CD8-positive, alpha-beta memory T cell (primary cell): ENCODE measurements at regions of chr10 and their contacts with region 1.

Region 1: GRCh38 chr10:35126530-35127296 is at the start of gene CREM:
- DNase-seq: peak; percentile 98 to 100 (median 99)
- H3K4me3 ChIP-seq: peak within 1 kb of the TSS; percentile 77
- H3K4me3 Mint-ChIP-seq: peak within 1 kb of the TSS; percentile 85 to 98 (median 91)
- H3K27ac ChIP-seq: peak within 1 kb of the TSS; percentile 100
- H3K27ac Mint-ChIP-seq: peak within 1 kb of the TSS; percentile 88 to 100 (median 99)
- H3K4me1 ChIP-seq: peaks cover 38% of the 10 kb centered on the region
- H3K4me1 Mint-ChIP-seq: peaks cover 33 to 52% (median 41%) of the 10 kb centered on the region in 3 donors
- H3K27me3 ChIP-seq: no peaks in the 10 kb centered on the region
- H3K27me3 Mint-ChIP-seq: peaks cover 0 to 10% of the 10 kb centered on the region in 2 donors
- total RNA-seq, gene CREM: 132 to 134 TPM

Region 2: DNA sequence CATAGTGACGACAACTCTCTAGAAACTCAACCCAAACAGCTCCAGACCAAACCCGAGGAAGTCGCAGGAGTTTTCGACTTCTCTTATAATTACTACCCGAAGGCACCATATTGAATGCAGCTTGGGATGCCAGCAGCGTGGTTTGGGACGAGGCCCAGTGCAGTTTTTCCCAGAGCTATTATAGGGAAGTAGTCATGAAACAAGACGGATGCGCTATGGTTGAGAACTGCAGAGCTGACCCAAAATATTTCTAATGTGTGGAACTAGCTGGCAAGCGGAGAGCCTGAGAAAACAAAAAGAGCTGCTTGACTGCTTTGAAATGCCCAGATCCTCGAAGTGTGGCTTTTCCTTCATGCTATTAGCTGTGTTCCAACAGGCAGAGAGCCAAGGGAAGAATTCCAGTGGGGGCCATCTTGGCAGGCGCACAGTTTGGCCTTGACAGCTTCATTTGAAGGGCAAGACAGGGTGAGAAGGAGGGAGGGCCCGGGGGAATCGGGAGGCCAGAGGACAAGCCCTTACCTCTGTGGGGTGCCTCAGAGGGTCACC is 159.3 kb before region 1 on chr10:
- CTCF ChIA-PET with region 1: no interaction called
- POLR2A ChIA-PET with region 1: no interaction called
- DNase-seq: no peak
- H3K4me3 ChIP-seq: no peak overlapping the region
- H3K4me3 Mint-ChIP-seq: no peak overlapping the region
- H3K27ac ChIP-seq: no peak overlapping the region
- H3K27ac Mint-ChIP-seq: no peak overlapping the region
- H3K4me1 ChIP-seq: no peaks in the 10 kb centered on the region
- H3K4me1 Mint-ChIP-seq: no peaks in the 10 kb centered on the region
- H3K27me3 ChIP-seq: no peaks in the 10 kb centered on the region
- H3K27me3 Mint-ChIP-seq: peaks cover 0 to 4% of the 10 kb centered on the region in 2 donors

Region 3: DNA sequence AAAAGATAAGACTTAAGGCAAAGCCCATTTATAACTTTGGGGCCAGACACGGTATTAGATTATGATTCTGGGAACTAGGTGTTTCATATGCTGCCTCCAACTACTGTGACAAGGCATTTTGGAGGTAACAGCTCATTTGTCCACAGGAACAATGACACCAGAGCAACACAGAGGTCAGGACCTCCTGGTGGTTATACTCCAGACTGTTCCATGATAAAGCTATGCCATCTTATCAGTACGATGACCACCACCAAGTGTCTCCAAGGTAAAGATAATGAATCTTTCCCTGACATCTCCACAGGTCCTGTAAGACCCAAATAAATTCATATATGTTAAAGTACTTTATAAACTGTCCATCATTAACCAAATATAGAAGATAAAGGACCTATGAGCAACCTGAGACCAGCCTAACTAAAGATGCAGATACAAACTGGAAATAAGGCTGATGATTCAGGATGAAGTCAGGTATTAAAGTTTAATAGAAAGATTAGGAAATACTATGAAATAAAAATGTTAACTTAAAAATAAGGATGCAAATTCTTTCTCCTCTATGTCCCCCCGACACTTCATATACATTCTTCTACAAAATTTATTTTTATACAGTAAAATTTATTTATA is 62.8 kb before region 1 on chr10:
- CTCF ChIA-PET with region 1: no interaction called
- POLR2A ChIA-PET with region 1: no interaction called
- DNase-seq: no peak
- H3K4me3 ChIP-seq: no peak overlapping the region
- H3K4me3 Mint-ChIP-seq: no peak overlapping the region
- H3K27ac ChIP-seq: no peak overlapping the region
- H3K27ac Mint-ChIP-seq: no peak overlapping the region
- H3K4me1 ChIP-seq: no peaks in the 10 kb centered on the region
- H3K4me1 Mint-ChIP-seq: peaks cover 2 to 24% (median 12%) of the 10 kb centered on the region in 3 donors
- H3K27me3 ChIP-seq: no peaks in the 10 kb centered on the region
- H3K27me3 Mint-ChIP-seq: no peaks in the 10 kb centered on the region

Region 4: GRCh38 chr10:35090162-35090954 is 36.4 kb before region 1 on chr10 and contains the start of gene CUL2:
- CTCF ChIA-PET with region 1: interaction called, 14 read pairs
- POLR2A ChIA-PET with region 1: interaction called, 23 read pairs
- DNase-seq: peak; percentile 86 to 95 (median 93)
- H3K4me3 ChIP-seq: peak within 1 kb of the TSS; percentile 75
- H3K4me3 Mint-ChIP-seq: peak within 1 kb of the TSS; percentile 92 to 100 (median 95)
- H3K27ac ChIP-seq: peak within 1 kb of the TSS; percentile 95
- H3K27ac Mint-ChIP-seq: peak within 1 kb of the TSS; percentile 93 to 100 (median 98)
- H3K4me1 ChIP-seq: peaks cover 36% of the 10 kb centered on the region
- H3K4me1 Mint-ChIP-seq: peaks cover 49 to 56% (median 53%) of the 10 kb centered on the region in 3 donors
- H3K27me3 ChIP-seq: no peaks in the 10 kb centered on the region
- H3K27me3 Mint-ChIP-seq: peaks cover 5 to 10% of the 10 kb centered on the region in 2 donors
- total RNA-seq, gene CUL2: 56.8 to 59.4 TPM

Region 5: DNA sequence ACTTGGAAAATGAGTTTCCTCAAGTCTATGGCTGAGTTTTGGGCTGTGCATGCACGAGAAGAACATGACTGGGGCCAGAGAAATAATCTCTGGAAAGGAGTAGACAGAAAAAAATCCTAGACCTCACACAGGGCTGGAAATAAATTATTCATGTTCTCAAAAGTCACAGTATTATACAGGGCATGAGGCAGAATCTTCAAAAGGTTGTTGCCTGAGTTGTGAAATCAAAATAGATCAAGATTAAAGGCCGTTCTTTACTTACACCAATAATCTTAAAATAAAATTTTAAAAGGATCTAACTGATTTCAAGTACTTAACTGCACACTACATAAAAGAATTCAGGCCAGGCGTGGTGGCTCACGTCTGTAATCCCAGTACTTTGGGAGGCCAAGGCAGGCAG is 14.1 kb before region 1 on chr10:
- CTCF ChIA-PET with region 1: no interaction called
- POLR2A ChIA-PET with region 1: no interaction called
- DNase-seq: no peak
- H3K4me3 ChIP-seq: no peak overlapping the region
- H3K4me3 Mint-ChIP-seq: no peak overlapping the region
- H3K27ac ChIP-seq: no peak overlapping the region
- H3K27ac Mint-ChIP-seq: no peak overlapping the region
- H3K4me1 ChIP-seq: no peaks in the 10 kb centered on the region
- H3K4me1 Mint-ChIP-seq: no peaks in the 10 kb centered on the region
- H3K27me3 ChIP-seq: no peaks in the 10 kb centered on the region
- H3K27me3 Mint-ChIP-seq: peaks cover 2 to 3% of the 10 kb centered on the region in 2 donors

Region 6: GRCh38 chr10:35150308-35150707 is 23.6 kb after region 1 on chr10:
- CTCF ChIA-PET with region 1: interaction called, 3 read pairs
- POLR2A ChIA-PET with region 1: interaction called, 14 read pairs
- DNase-seq: no peak
- H3K4me3 ChIP-seq: no peak overlapping the region
- H3K4me3 Mint-ChIP-seq: peak overlapping the region in 4 of 7 donors; percentile 16 to 64 (median 56)
- H3K27ac ChIP-seq: no peak overlapping the region
- H3K27ac Mint-ChIP-seq: peak overlapping the region; percentile 79 to 98 (median 96)
- H3K4me1 ChIP-seq: peaks cover 17% of the 10 kb centered on the region
- H3K4me1 Mint-ChIP-seq: peaks cover 23 to 38% (median 30%) of the 10 kb centered on the region in 3 donors
- H3K27me3 ChIP-seq: no peaks in the 10 kb centered on the region
- H3K27me3 Mint-ChIP-seq: peaks cover 0 to 1% of the 10 kb centered on the region in 2 donors

Region 7: GRCh38 chr10:35218339-35218955 is 91.7 kb after region 1 on chr10:
- CTCF ChIA-PET with region 1: interaction called, 122 read pairs
- POLR2A ChIA-PET with region 1: interaction called, 7 read pairs
- DNase-seq: peak; percentile 67 to 86 (median 71)
- H3K4me3 ChIP-seq: no peak overlapping the region
- H3K4me3 Mint-ChIP-seq: peak overlapping the region in 2 of 7 donors; percentile 18 to 28
- H3K27ac ChIP-seq: no peak overlapping the region
- H3K27ac Mint-ChIP-seq: peak overlapping the region in 7 of 8 donors; percentile 7 to 96 (median 85)
- H3K4me1 ChIP-seq: no peaks in the 10 kb centered on the region
- H3K4me1 Mint-ChIP-seq: peaks cover 7 to 18% (median 11%) of the 10 kb centered on the region in 3 donors
- H3K27me3 ChIP-seq: no peaks in the 10 kb centered on the region
- H3K27me3 Mint-ChIP-seq: peaks cover 6 to 10% of the 10 kb centered on the region in 2 donors

Region 8: GRCh38 chr10:35642027-35642792 is 515.5 kb after region 1 on chr10 and contains the start of gene FZD8:
- CTCF ChIA-PET with region 1: no interaction called
- POLR2A ChIA-PET with region 1: no interaction called
- DNase-seq: peak; percentile 28 to 68 (median 59)
- H3K4me3 ChIP-seq: peak within 1 kb of the TSS; percentile 74
- H3K4me3 Mint-ChIP-seq: peak within 1 kb of the TSS; percentile 74 to 93 (median 86)
- H3K27ac ChIP-seq: no peak within 1 kb of the TSS
- H3K27ac Mint-ChIP-seq: peak within 1 kb of the TSS in 3 of 8 donors; percentile 22 to 54 (median 43)
- H3K4me1 ChIP-seq: peaks cover 13% of the 10 kb centered on the region
- H3K4me1 Mint-ChIP-seq: peaks cover 16 to 37% (median 21%) of the 10 kb centered on the region in 3 donors
- H3K27me3 ChIP-seq: peaks cover 11% of the 10 kb centered on the region
- H3K27me3 Mint-ChIP-seq: peaks cover 15 to 39% of the 10 kb centered on the region in 2 donors
- total RNA-seq, gene FZD8: 0.50 to 0.55 TPM